ENCODE measurements at regions of chr22 and their contacts with region 1.

Region 1: DNA sequence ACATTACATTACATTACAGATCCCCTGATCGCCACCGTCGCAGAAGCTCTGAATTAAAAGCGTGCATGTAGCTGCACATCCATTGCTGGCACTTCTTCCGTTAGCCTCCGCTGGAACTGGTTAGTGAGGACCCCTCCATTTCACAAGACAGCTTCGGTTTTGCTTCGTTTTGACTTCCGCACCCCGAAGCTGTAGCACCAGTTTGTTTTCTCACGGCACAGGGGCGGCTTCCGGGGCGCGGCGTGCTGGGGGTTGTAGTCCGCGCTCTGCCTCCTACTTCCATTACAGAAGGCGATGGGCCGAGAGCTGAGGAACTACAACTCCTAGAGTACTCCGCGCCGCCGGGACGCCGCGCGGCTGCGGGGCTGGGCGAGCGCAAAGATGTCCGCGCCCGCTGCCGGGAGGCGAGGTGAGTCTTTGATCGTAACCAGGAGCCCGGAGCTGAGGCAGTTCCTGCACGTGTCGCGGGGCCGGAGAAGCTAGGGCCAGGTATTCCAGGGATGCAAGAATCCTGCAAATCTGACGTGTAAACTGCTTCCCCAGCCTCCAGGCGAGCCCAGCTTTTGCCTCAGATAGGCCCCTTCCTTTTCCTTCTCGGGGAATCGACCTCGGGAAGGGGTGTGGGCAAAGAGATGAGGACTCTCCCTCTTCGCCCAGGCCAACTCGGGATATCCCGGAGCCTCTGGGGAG is at the start of gene PEX26:
- DNase-seq: peak; percentile 95
- H3K4me3 ChIP-seq: peak within 1 kb of the TSS; percentile 90 to 96
- H3K27ac ChIP-seq: peak within 1 kb of the TSS; percentile 58 to 80
- H3K4me1 ChIP-seq: peaks cover 14 to 23% of the 10 kb centered on the region in 2 experiments
- H3K27me3 ChIP-seq: no peaks in the 10 kb centered on the region
- CTCF ChIP-seq: no peak
- EP300 ChIP-seq: no peak
- RAD21 ChIP-seq: no peak
- polyA plus RNA-seq, gene PEX26: 13.0 and 17.5 TPM in 2 replicates

Region 2: GRCh38 chr22:17742527-17742902 is 335.3 kb before region 1 on chr22:
- CTCF ChIA-PET with region 1: interaction called, 31 read pairs
- POLR2A ChIA-PET with region 1: no interaction called
- DNase-seq: peak; percentile 93
- H3K4me3 ChIP-seq: no peak overlapping the region
- H3K27ac ChIP-seq: no peak overlapping the region
- H3K4me1 ChIP-seq: peaks cover 0 to 2% of the 10 kb centered on the region in 2 experiments; a peak in 1 of 4 replicates
- H3K27me3 ChIP-seq: no peaks in the 10 kb centered on the region
- CTCF ChIP-seq: peak; percentile 76
- EP300 ChIP-seq: no peak
- RAD21 ChIP-seq: peak; percentile 86

Region 3: DNA sequence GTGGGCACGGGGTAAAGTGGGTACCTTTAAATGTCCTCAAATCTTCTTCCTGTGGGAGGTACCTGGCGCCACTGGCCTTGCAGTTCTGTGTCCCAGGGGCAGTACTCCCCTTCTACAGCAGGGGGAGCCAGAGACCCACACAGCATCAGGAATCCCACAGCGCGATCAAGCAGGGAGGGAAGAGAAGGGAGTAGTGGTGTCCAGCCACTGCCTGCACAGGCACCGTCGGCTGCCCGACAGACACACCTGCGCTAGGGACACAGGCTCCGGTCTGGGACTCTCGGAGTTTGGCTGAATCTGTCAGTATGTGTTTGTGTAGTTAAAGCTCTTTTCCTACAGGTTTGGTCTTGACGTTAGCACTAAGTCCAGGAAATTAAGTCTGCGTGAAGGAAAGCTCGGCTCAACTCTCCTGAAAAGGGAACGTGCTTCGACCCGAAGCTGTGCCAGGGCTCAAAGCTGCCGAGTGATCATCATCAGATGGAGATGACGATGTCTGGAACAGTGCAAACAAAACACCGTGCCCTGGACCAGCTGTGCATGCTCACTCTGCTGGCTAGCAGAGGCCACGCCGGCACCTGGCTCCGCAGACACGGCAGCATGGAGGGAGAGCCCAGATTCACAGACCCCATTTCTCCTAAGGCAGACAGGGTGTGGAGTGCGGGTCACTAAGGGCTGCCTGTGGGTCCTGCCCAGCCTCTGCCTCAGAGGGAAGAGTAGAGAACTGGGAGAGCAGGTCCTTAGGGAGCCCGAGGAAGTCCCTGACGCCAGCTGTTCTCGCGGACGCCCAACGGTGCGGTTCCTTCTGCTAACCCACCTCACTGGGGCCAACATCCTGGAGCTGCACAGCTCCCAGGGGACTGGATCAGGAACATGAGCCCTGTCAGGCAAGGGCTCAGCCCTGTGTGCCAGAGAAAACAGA is 247.5 kb before region 1 on chr22:
- CTCF ChIA-PET with region 1: interaction called, 186 read pairs
- POLR2A ChIA-PET with region 1: no interaction called
- DNase-seq: peak; percentile 92
- H3K4me3 ChIP-seq: peak overlapping the region in 1 of 2 experiments; percentile 17; a peak in 1 of 4 replicates
- H3K27ac ChIP-seq: no peak overlapping the region; a peak in 1 of 4 replicates
- H3K4me1 ChIP-seq: peaks cover 0 to 9% of the 10 kb centered on the region in 2 experiments; a peak in 1 of 4 replicates
- H3K27me3 ChIP-seq: no peaks in the 10 kb centered on the region
- CTCF ChIP-seq: peak; percentile 97
- EP300 ChIP-seq: no peak
- RAD21 ChIP-seq: peak; percentile 98

Region 4: GRCh38 chr22:17891481-17892167 is 186.2 kb before region 1 on chr22:
- CTCF ChIA-PET with region 1: interaction called, 32 read pairs
- POLR2A ChIA-PET with region 1: no interaction called
- DNase-seq: peak; percentile 62
- H3K4me3 ChIP-seq: no peak overlapping the region
- H3K27ac ChIP-seq: no peak overlapping the region; a peak in 1 of 4 replicates
- H3K4me1 ChIP-seq: peaks cover 8 to 9% of the 10 kb centered on the region in 2 experiments; a peak in 3 of 4 replicates
- H3K27me3 ChIP-seq: no peaks in the 10 kb centered on the region
- CTCF ChIP-seq: peak; percentile 39
- EP300 ChIP-seq: no peak
- RAD21 ChIP-seq: peak; percentile 76

Region 5: GRCh38 chr22:17920145-17920605 is 157.6 kb before region 1 on chr22:
- CTCF ChIA-PET with region 1: interaction called, 12 read pairs
- POLR2A ChIA-PET with region 1: interaction called, 5 read pairs
- DNase-seq: peak; percentile 79
- H3K4me3 ChIP-seq: no peak overlapping the region
- H3K27ac ChIP-seq: peak overlapping the region in 1 of 2 experiments; percentile 92; a peak in 2 of 4 replicates
- H3K4me1 ChIP-seq: peaks cover 23 to 59% of the 10 kb centered on the region in 2 experiments
- H3K27me3 ChIP-seq: no peaks in the 10 kb centered on the region
- CTCF ChIP-seq: no peak
- EP300 ChIP-seq: no peak
- RAD21 ChIP-seq: peak; percentile 15

Region 6: GRCh38 chr22:18024276-18024947 is 53.4 kb before region 1 on chr22 and contains the start of gene MICAL3:
- CTCF ChIA-PET with region 1: interaction called, 44 read pairs
- POLR2A ChIA-PET with region 1: interaction called, 3 read pairs
- DNase-seq: peak; percentile 93
- H3K4me3 ChIP-seq: peak within 1 kb of the TSS; percentile 79 to 84
- H3K27ac ChIP-seq: peak within 1 kb of the TSS; percentile 39 to 62; a peak in 3 of 4 replicates
- H3K4me1 ChIP-seq: peaks cover 0 to 10% of the 10 kb centered on the region in 2 experiments; a peak in 1 of 4 replicates
- H3K27me3 ChIP-seq: no peaks in the 10 kb centered on the region
- CTCF ChIP-seq: peak; percentile 63
- EP300 ChIP-seq: no peak; a peak in 1 of 4 replicates
- RAD21 ChIP-seq: peak; percentile 64
- polyA plus RNA-seq, gene MICAL3: 50.9 and 83.1 TPM in 2 replicates